ENCODE measurements at regions of chr15 and their contacts with region 1.

Region 1: GRCh38 chr15:78108299-78109084 is 16.1 kb downstream of the SH2D7 start:
- ATAC-seq: peak; percentile 71 to 95 (median 90)
- H3K4me3 ChIP-seq: no peak overlapping the region
- H3K27ac ChIP-seq: no peak overlapping the region
- H3K4me1 ChIP-seq: peaks cover 0 to under 1% of the 10 kb centered on the region in 2 donors

Region 2: DNA sequence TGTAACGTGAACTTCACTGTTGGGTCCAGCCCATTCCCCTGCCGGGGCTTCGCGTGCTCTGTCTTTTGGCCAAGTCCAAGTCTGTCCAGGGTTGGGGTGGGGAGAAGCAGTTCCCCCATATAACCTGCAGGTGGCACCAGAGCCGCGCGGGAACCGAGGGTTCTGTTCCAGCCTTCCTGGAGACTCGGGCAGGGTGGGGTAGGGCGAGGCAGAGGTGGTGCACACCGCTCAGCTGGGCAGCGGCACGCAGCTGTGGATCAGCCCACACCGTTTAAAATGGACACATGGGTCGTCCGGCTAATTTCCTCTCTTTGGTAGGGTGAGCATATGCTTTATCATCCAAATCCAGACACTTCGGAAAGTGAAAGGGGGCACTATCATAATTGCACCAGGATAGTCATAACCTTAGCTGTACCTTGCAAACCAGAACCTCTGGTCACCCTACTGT is 149.0 kb before region 1 on chr15:
- in situ Hi-C with region 1: loop called in 8 of 9 experiments (anchors 10 to 25 kb)
- ATAC-seq: peak; percentile 97 to 100 (median 98)
- H3K4me3 ChIP-seq: no peak overlapping the region
- H3K27ac ChIP-seq: no peak overlapping the region
- H3K4me1 ChIP-seq: no peaks in the 10 kb centered on the region

Region 3: DNA sequence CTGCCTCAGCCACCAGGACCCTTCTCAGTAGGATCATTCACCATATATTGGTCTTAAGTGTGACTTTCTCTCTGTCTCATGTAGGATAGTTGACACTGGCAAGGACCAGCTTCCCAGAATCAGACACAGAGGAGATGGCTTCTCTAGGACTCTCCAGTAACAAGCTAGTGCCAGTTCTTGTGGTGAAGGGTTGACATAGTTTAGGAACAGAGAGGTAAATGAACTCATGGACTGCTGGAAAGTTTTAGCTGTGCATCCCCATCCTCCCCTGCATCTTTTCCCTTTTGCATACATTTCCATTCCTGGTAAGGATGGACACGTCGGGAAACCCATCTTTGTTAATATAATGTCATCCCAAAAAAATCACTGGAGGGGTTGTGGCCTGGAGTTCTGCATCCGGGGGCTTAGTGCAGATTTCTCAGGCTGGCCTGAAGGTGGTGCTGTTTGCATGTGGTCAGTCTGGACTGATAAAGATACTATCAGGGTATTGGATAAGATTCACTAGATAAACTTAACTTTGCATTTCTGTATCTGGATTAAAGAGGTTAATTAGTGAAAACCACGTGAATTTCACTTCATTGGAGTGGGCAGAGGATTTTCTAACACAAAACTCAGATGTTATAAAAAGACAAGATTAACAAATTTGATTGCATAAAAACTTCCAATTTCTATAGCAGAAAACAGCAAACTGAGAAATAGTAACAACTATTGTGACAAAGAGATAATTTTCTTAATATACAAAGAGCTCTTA is 141.8 kb before region 1 on chr15:
- in situ Hi-C with region 1: loop called in 8 of 9 experiments (anchors 10 to 25 kb)
- ATAC-seq: peak; percentile 54 to 94 (median 74)
- H3K4me3 ChIP-seq: no peak overlapping the region
- H3K27ac ChIP-seq: no peak overlapping the region
- H3K4me1 ChIP-seq: no peaks in the 10 kb centered on the region

Region 4: GRCh38 chr15:78170848-78171773 is 62.6 kb after region 1 on chr15:
- in situ Hi-C with region 1: no loop called
- ATAC-seq: no peak
- H3K4me3 ChIP-seq: no peak overlapping the region
- H3K27ac ChIP-seq: no peak overlapping the region
- H3K4me1 ChIP-seq: no peaks in the 10 kb centered on the region

Measured in motor neuron (in vitro differentiated cells).